MCF 10A (cell line): ENCODE measurements at regions of chr17 and their contacts with region 1.

Region 1: GRCh38 chr17:45148183-45149036 is at the start of gene HEXIM1:
- DNase-seq: peak; percentile 99
- H3K4me3 Mint-ChIP-seq: peak within 1 kb of the TSS; percentile 97
- H3K27ac Mint-ChIP-seq: peak within 1 kb of the TSS; percentile 100
- H3K4me1 Mint-ChIP-seq: peaks cover 23% of the 10 kb centered on the region
- H3K27me3 Mint-ChIP-seq: no peaks in the 10 kb centered on the region
- CTCF ChIP-seq: no peak
- total RNA-seq, gene HEXIM1: 22.5 and 26.7 TPM in 2 replicates

Region 2: GRCh38 chr17:44979426-44979995 is 168.9 kb before region 1 on chr17:
- CTCF ChIA-PET with region 1: no interaction called
- POLR2A ChIA-PET with region 1: no interaction called
- intact Hi-C with region 1: no loop called
- DNase-seq: no peak
- H3K4me3 Mint-ChIP-seq: no peak overlapping the region
- H3K27ac Mint-ChIP-seq: no peak overlapping the region
- H3K4me1 Mint-ChIP-seq: peaks cover 20% of the 10 kb centered on the region
- H3K27me3 Mint-ChIP-seq: no peaks in the 10 kb centered on the region
- CTCF ChIP-seq: no peak

Region 3: GRCh38 chr17:45051060-45051719 is 97.2 kb before region 1 on chr17 and contains the start of gene DCAKD:
- CTCF ChIA-PET with region 1: interaction called, 6 read pairs
- POLR2A ChIA-PET with region 1: interaction called, 26 read pairs
- intact Hi-C with region 1: no loop called
- DNase-seq: peak; percentile 95
- H3K4me3 Mint-ChIP-seq: peak within 1 kb of the TSS; percentile 75
- H3K27ac Mint-ChIP-seq: peak within 1 kb of the TSS; percentile 77
- H3K4me1 Mint-ChIP-seq: peaks cover 16% of the 10 kb centered on the region
- H3K27me3 Mint-ChIP-seq: no peaks in the 10 kb centered on the region
- CTCF ChIP-seq: no peak
- total RNA-seq, gene DCAKD: 23.1 and 23.3 TPM in 2 replicates

Region 4: GRCh38 chr17:45123930-45124796 is 24.2 kb before region 1 on chr17:
- CTCF ChIA-PET with region 1: interaction called, 4 read pairs
- POLR2A ChIA-PET with region 1: interaction called, 14 read pairs
- intact Hi-C with region 1: no loop called
- DNase-seq: peak; percentile 89
- H3K4me3 Mint-ChIP-seq: peak overlapping the region; percentile 35
- H3K27ac Mint-ChIP-seq: peak overlapping the region; percentile 91
- H3K4me1 Mint-ChIP-seq: peaks cover 42% of the 10 kb centered on the region
- H3K27me3 Mint-ChIP-seq: no peaks in the 10 kb centered on the region
- CTCF ChIP-seq: no peak

Region 5: GRCh38 chr17:45190503-45191255 is 42.3 kb after region 1 on chr17:
- CTCF ChIA-PET with region 1: interaction called, 200 read pairs
- POLR2A ChIA-PET with region 1: interaction called, 396 read pairs
- intact Hi-C with region 1: no loop called
- DNase-seq: no peak
- H3K4me3 Mint-ChIP-seq: no peak overlapping the region
- H3K27ac Mint-ChIP-seq: no peak overlapping the region
- H3K4me1 Mint-ChIP-seq: no peaks in the 10 kb centered on the region
- H3K27me3 Mint-ChIP-seq: no peaks in the 10 kb centered on the region
- CTCF ChIP-seq: no peak

Region 6: DNA sequence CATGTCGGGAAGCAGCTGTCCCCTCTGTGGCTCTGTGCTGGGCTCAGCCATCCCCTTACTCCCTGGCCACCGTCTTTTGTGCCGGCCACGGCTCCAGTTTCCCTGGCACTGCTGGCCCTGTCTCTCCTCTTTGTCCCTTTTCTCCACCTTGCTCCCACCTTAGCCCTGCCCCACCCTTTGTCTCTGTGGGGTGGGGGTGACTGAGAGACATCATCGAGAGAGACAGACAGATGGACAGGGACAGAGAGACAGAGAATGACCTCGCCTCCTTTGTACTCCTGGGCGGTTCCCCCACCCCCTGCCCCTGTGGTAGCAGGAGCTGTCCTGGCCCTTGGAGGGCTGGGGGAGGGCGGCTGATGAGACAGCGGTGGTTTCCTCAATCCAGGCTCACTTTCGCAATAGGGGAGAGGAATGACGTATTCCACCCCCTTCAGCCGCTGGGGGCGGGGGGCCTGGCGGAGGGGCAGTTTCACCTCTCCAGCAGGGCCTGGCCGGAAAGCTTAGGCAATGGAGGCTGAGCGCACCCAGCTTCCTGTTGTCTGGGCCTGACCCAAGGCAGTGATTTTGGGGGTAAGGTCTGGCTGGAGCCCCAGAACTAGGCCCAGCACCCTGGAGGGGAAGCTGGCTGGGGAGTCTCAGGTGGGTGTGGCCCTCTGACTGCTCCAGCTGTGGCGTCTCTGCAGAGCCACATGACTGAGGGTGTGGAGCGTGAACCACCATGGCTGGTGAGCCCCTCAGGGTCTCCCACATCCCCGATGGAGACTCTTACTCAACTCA is 80.5 kb after region 1 on chr17:
- CTCF ChIA-PET with region 1: interaction called, 9 read pairs
- POLR2A ChIA-PET with region 1: interaction called, 26 read pairs
- intact Hi-C with region 1: no loop called
- DNase-seq: peak; percentile 97
- H3K4me3 Mint-ChIP-seq: peak overlapping the region; percentile 46
- H3K27ac Mint-ChIP-seq: peak overlapping the region; percentile 91
- H3K4me1 Mint-ChIP-seq: peaks cover 53% of the 10 kb centered on the region
- H3K27me3 Mint-ChIP-seq: no peaks in the 10 kb centered on the region
- CTCF ChIP-seq: no peak

Region 7: DNA sequence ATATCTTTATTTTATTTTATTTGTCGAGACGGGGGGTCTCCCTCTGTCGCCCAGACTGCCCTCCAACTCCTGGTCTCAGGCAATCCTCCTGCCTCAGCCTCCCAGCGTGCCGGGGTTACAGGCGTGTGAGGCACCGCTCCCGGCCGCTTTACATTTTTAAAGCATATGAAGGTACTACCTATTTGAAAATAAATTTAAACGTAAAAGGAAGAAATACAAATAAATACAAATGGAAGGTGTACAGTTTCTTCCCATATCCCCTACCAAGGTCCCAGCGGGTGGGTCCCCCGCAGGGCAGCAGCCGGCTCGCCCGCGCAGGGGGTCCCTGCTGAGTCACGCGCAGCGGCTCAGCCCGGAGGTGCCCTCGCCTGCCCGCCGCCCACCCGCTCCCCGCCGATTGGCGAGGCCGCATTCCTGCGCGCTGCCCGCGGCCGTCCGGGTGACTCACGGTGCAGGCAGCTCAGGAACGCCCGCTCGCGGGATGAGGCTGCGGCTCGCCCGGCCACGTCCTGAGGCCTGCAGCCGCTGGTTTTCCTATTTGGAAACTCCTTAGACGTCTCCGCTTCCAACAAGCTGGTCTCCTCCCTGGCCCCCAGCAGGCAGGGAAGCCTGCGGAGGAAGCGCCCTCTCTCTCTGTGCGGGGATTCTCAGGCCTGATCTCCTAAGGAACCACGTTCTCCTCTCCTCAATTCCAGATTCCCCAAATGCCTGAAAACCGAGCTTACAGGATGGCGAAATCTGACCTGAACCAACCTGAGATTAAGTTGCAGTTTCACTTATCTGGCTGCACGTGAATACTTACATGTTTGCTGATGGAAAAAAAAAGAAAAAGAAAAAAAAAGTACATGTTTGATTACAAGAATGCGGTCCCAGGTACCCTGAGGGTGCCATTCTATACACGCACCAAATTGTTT is 223.3 kb after region 1 on chr17:
- CTCF ChIA-PET with region 1: interaction called, 4 read pairs
- POLR2A ChIA-PET with region 1: interaction called, 12 read pairs
- intact Hi-C with region 1: no loop called
- DNase-seq: peak; percentile 95
- H3K4me3 Mint-ChIP-seq: peak overlapping the region; percentile 83
- H3K27ac Mint-ChIP-seq: peak overlapping the region; percentile 95
- H3K4me1 Mint-ChIP-seq: peaks cover 35% of the 10 kb centered on the region
- H3K27me3 Mint-ChIP-seq: no peaks in the 10 kb centered on the region
- CTCF ChIP-seq: no peak